ENCODE measurements at regions of chr12 and their contacts with region 1.

Region 1: DNA sequence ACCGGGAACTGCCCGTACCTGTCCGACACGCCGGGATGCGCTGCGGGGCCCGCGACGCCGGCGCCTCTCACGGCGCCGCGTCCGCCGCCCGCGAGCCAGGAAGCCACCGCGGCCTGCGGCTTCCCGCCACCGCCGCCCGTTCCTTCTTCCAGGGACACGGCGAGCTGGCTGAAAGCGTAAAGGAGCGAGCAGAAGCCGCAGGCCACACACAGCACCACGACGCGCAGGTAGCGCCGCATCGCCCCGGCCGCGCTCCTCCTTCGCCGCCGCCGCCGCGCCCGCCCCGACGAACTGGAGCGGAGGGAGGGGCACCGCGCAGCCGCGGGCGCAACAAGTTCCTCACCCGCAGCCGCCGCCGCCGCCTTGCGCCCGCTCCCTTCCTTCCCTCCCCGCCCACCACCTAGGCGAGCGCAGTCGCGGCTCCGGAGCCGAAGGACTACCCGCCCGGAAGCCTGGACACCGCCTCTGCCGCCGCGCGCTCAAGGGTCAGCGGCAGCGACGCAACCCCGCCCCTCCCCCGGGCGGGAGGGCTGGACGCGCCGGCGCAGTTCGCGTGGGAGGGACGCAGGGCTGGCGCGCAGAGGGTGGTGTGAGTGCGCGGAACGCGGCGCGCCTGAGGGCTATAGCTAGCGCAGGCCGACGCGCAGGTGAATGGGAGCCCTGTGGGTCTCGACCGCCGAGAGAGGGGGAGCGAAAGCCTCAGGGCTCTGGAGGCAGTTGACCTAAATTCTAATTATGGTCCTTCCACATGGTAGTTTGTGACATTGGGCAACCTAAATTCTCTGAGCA is at the start of gene GXYLT1:
- DNase-seq: peak; percentile 93
- ATAC-seq: peak; percentile 96
- total RNA-seq, gene GXYLT1: 8.5 to 9.3 TPM

Region 2: DNA sequence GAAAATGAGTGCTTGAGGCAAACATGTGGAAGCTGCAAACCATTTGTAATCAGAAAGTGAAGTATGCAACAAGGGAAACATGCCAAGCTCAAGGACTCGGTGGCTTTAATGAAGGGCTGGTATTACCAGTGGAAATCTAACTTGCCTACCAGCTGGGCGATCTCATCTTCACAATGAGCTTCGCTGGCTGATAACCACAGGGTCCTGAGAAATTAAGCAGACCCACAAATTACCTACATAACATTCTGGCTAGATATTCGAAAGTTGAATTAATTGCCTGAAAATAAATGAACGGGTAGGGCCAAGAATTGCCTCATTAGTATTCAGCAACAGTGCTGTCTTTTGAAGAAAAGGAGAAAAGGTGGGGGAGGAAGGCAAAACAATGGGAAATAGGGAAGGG is 517.1 kb before region 1 on chr12:
- intact Hi-C with region 1: no loop called
- DNase-seq: no peak
- ATAC-seq: no peak

Region 3: GRCh38 chr12:42325653-42326474 is 181.3 kb after region 1 on chr12 and contains the starts of genes PPHLN1 and ZCRB1:
- intact Hi-C with region 1: loop called in 1 of 2 experiments (anchors 5 kb)
- DNase-seq: peak; percentile 83 to 92
- ATAC-seq: peak; percentile 99
- total RNA-seq, gene PPHLN1: 38.2 to 38.5 TPM
- total RNA-seq, gene ZCRB1: 31.3 to 31.6 TPM